ENCODE measurements at regions of chr1 and their contacts with region 1.

Region 1: GRCh38 chr1:246002725-246003441 is 504.2 kb downstream of the SMYD3 start:
- DNase-seq: peak; percentile 78 to 94 (median 85)
- H3K4me3 ChIP-seq: no peak overlapping the region
- H3K27ac ChIP-seq: no peak overlapping the region
- H3K27me3 ChIP-seq: no peaks in the 10 kb centered on the region
- CTCF ChIP-seq: peak; percentile 75 to 96 (median 90)

Region 2: GRCh38 chr1:245079021-245079609 is 923.8 kb before region 1 on chr1:
- intact Hi-C with region 1: loop called in 1 of 2 experiments (anchors 10 kb)
- DNase-seq: no peak
- H3K4me3 ChIP-seq: no peak overlapping the region
- H3K27ac ChIP-seq: no peak overlapping the region
- H3K27me3 ChIP-seq: no peaks in the 10 kb centered on the region
- CTCF ChIP-seq: peak; percentile 41 to 87 (median 68)

Region 3: DNA sequence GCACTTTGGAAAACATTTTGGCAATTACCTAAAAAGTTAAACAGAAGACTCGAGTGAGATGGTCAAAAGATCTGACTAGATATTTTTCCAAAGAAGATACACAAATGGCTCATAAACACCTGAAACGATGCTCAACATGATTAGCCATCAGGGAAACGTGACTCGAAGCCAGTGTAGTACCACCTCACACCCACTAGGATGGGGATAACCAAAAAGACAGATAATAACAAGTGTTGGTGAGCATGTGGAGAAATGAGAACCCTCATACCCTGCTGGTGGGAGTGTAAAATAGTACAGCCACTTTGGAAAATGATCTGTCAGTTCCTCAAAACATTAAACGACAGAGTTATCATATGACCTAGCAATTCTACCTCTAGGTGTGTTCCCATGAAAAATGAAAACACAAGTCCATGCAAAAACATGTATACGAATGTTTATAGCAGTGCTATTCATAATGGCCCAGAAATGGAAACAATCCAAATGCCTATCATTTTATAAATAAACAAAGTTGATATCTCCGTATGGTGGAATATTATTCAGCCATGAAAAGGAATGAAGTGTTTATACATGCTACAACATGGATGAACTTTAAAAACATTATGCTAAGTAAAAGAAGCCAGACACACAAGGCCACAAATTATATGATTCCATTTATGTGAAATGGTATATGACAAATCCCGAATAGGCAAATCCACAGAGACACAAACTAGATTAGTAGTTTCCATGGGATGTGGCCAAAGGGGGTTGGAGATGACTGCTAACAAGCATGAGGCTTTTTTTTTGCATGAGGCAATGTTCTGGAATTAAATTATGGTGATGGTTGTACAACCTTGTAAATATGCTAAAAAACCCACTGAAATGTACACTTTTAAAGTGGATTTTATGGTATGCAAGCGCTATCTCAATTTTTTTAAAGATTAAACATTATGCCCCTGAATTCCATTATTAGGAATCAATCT is 222.8 kb before region 1 on chr1:
- intact Hi-C with region 1: no loop called
- DNase-seq: no peak
- H3K4me3 ChIP-seq: no peak overlapping the region
- H3K27ac ChIP-seq: no peak overlapping the region
- H3K27me3 ChIP-seq: no peaks in the 10 kb centered on the region
- CTCF ChIP-seq: peak in 3 of 56 donors; percentile 9 to 25 (median 13)

Region 4: GRCh38 chr1:245986404-245987220 is 16.3 kb before region 1 on chr1:
- intact Hi-C with region 1: no loop called
- DNase-seq: no peak
- H3K4me3 ChIP-seq: no peak overlapping the region
- H3K27ac ChIP-seq: no peak overlapping the region
- H3K27me3 ChIP-seq: no peaks in the 10 kb centered on the region
- CTCF ChIP-seq: no peak

Region 5: GRCh38 chr1:246117066-246117791 is 114.3 kb after region 1 on chr1:
- intact Hi-C with region 1: no loop called
- DNase-seq: peak in 2 of 10 donors; percentile 27 to 35
- H3K4me3 ChIP-seq: no peak overlapping the region
- H3K27ac ChIP-seq: no peak overlapping the region
- H3K27me3 ChIP-seq: no peaks in the 10 kb centered on the region
- CTCF ChIP-seq: peak in 55 of 56 donors; percentile 15 to 72 (median 50)

Region 6: DNA sequence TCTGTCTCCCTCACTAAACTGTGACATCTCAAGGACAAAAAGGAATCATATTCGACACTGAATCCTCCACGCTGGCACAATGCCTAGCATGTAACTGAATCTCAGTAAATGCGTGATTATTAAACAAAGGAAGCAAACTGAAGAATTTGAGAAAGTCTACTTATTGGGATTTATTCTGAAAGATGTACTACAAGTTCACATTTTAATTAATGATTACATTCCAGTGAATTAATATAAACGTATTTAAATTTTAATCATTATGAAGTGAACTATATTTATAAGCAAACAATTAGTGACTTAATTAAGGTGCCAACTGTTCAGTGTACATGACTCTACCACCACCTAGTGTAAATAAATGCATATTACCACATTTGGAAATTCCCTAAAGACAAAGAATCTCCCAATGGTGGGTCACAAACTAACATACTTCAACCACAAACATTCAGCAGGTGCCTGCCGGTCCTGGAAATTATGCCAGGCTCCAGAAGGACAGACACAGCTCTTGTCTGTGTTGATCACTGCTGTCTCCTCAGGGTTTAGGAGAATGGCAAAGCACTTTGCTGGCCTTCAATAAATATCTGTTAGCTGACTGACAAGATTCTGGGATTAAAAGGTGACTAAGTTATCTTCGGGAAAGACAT is 447.8 kb after region 1 on chr1:
- intact Hi-C with region 1: loop called in 1 of 2 experiments (anchors 10 kb)
- DNase-seq: no peak
- H3K4me3 ChIP-seq: no peak overlapping the region
- H3K27ac ChIP-seq: no peak overlapping the region
- H3K27me3 ChIP-seq: no peaks in the 10 kb centered on the region
- CTCF ChIP-seq: peak; percentile 33 to 82 (median 66)

Measured in dorsolateral prefrontal cortex (tissue), 120 donors.